Left cardiac atrium (tissue), 4 donors: ENCODE measurements at regions of chr3 and their contacts with region 1.

Region 1: DNA sequence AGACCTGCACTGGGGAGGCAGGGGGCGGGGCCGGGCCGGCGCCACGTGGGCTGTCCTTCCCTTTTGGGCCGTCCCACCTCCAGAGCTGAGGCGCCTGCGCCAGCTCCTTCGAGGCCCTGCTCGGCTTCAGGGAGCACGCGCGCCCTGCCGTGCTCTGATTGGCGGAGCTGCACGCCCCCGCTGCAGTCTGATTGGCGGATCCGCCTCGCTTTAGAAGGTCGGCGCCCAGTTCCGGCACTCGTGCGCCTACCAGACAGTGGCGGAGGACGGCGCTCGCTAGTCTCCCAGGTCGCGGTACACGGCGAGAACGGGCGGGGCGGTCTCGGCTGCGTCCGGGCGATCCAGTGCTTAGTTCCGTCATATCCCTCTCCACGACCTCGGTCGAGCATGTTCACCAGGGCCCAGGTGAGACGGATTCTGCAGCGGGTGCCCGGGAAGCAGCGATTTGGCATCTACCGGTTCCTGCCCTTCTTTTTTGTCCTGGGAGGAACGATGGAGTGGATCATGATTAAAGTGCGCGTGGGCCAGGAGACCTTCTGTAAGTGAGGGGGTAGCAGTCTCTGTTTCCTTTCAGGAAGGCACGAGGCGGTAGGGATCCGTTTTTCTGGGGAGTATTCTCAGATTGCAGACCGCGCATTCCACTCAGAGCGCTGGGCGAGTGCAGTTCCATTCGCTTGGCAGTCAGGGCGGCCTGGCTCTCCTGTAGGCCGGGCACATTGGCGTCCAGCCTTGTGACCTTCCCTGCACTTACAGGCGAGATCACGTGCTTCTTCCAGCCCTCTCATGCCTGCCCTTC is at the start of gene UQCC5:
- DNase-seq: peak; percentile 99
- ATAC-seq: peak; percentile 92 to 93
- total RNA-seq, gene UQCC5: 52.9 to 70.4 TPM

Region 2: DNA sequence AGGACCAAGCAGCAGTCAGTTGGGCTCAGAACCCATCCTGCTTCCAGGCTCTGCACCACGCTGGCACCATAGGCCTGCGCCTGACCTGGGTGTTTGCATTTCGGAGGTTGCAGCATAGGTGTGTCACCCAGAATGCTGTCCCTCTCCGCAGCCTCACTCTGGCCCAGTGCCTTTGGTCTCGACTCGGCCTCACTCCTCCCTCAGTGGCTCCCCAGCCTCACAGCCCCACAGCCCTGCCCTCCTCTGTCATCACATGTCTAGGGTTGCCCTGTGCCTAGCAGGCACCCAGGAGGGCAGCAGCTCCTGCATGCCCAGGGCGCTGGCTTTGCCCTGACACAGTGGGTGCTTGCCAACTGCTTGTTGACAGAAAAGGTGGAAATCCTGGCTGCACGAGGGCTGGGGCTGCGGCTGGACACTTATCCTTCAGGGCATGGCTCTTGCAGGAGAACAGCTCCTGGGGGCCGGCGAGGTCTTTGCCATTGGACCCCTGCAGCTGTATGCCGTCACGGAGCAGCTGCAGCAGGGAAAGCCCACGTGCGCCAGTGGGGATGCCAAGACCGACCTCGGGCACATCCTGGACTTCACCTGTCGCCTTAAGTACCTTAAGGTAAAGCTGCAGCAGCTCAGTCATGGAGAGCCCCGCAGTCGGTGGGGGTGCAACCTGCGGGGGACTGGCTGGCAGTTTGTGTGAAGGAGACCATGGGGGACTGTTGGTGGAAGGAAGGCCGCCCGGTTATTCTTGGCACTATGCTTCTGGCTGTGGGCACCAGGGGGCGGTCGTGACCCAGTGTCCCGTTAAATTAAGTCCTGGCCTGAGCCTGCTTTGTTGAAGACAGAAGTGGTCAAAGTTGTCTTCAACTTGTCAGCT is 65.0 kb before region 1 on chr3:
- intact Hi-C with region 1: loop called (anchors 5 kb)
- DNase-seq: peak; percentile 82
- ATAC-seq: peak; percentile 65 to 80

Region 3: DNA sequence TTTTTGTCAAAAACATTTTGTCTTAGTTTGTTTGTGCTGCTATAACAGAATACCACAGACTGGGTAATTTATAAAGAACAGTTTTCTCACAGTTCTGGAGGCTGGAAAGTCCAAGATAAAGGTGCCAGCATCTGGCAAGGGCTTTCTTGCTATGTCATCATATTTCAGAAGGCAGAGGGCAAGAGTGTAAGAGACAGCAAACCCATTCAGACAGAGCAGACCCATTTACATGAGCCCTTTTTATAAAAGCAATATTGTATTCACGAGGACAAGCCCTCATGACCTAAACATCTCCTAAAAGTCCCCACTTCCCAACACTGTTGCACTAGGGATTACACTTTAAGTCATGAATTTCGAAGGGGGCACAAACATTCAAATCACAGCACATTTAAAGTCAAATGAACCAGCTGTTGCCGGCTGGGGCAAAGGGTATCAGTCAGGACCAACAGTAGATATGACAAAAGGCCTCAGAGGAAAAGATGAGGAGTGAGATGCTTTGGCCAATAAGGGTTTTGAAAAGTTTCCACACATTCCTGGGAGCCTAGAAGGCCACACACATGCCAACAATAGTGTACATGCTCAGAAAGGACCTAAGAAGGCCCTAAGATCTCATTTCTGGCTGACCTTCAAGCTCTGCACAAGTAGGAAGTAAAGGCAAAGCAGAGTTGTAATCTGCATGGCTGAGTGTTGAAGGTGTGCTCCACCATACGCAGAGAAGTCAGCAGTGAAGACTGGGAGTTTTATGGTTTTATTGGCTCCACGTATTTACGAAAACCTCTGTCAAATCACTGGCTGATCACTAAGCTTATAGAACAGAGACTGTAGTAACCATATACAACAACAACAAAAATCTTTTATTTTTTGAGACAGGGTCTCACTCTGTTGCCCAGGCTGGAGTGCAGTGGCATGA is 37.7 kb after region 1 on chr3:
- intact Hi-C with region 1: no loop called
- DNase-seq: no peak
- ATAC-seq: no peak

Region 4: DNA sequence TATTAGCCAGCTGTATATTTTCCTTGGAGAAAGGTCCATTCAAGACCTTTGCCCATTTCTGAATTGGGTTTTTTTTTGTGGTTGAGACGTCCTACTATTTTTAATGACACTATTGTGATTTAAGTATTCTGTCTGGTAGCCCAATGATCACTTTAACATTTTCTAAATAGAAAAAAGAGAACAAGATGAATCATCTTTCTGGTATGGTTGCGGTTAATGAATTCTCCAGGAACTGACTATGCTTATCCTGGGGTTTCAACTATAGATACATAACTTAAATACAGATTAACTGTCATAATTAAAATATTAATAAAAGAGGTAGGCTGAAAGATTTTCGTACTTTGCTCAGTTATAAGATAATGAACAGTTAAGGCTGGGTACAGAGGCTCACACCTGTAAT is 97.2 kb after region 1 on chr3:
- intact Hi-C with region 1: no loop called
- DNase-seq: no peak
- ATAC-seq: no peak

Region 5: GRCh38 chr3:52655895-52656294 is 119.3 kb after region 1 on chr3:
- intact Hi-C with region 1: no loop called
- DNase-seq: no peak
- ATAC-seq: no peak